CD4-positive, alpha-beta memory T cell (primary cell): ENCODE measurements at regions of chr4 and their contacts with region 1.

Region 1: DNA sequence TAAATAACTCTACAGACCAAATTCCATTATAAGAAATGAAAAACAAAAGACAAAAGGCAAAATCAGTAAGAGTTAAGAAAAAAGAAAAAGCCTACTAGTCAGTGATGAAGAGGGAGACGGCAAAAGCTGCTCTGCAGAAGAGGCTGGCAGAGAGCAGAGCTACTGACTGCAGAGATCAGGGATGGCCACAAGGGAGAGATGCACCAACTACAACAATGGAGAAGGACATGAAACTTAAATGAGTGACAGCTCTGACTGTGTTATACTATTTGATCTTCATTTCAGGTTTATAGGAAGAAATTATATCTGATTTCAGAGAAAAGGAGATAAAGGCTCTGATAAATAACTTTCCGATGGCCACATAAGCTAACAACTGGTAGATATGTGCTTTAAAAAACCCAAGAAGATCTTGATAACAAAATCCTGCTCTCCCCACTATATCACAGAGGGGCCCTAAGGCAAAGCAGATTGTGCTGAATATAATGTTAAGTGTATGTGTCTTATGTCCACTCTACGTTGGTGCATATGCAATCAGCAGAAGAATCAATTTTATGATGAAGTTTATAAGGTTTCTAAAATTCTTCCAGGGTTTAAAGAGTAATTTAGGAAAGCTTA is 58.4 kb upstream of the COX18 start:
- DNase-seq: peak; percentile 6 to 25 (median 9)
- H3K4me3 ChIP-seq: no peak overlapping the region
- H3K4me3 Mint-ChIP-seq: no peak overlapping the region
- H3K27ac ChIP-seq: no peak overlapping the region
- H3K27ac Mint-ChIP-seq: peak overlapping the region in 2 of 7 donors; percentile 9 to 15
- H3K4me1 ChIP-seq: no peaks in the 10 kb centered on the region
- H3K4me1 Mint-ChIP-seq: peaks cover 0 to 11% (median 5%) of the 10 kb centered on the region in 4 donors
- H3K27me3 ChIP-seq: no peaks in the 10 kb centered on the region
- H3K27me3 Mint-ChIP-seq: no peaks in the 10 kb centered on the region

Region 2: GRCh38 chr4:73086095-73086868 is 41.7 kb before region 1 on chr4:
- CTCF ChIA-PET with region 1: interaction called, 3 read pairs
- POLR2A ChIA-PET with region 1: no interaction called
- intact Hi-C with region 1: loop called (anchors 5 kb)
- DNase-seq: peak in 3 of 5 donors; percentile 7 to 19 (median 15)
- H3K4me3 ChIP-seq: no peak overlapping the region
- H3K4me3 Mint-ChIP-seq: peak overlapping the region; percentile 70 to 78 (median 74)
- H3K27ac ChIP-seq: peak overlapping the region; percentile 46
- H3K27ac Mint-ChIP-seq: peak overlapping the region in 6 of 7 donors; percentile 68 to 87 (median 82)
- H3K4me1 ChIP-seq: no peaks in the 10 kb centered on the region
- H3K4me1 Mint-ChIP-seq: peaks cover 5 to 12% (median 8%) of the 10 kb centered on the region in 4 donors
- H3K27me3 ChIP-seq: no peaks in the 10 kb centered on the region
- H3K27me3 Mint-ChIP-seq: no peaks in the 10 kb centered on the region